ENCODE measurements at regions of chr20 and their contacts with region 1.

Region 1: DNA sequence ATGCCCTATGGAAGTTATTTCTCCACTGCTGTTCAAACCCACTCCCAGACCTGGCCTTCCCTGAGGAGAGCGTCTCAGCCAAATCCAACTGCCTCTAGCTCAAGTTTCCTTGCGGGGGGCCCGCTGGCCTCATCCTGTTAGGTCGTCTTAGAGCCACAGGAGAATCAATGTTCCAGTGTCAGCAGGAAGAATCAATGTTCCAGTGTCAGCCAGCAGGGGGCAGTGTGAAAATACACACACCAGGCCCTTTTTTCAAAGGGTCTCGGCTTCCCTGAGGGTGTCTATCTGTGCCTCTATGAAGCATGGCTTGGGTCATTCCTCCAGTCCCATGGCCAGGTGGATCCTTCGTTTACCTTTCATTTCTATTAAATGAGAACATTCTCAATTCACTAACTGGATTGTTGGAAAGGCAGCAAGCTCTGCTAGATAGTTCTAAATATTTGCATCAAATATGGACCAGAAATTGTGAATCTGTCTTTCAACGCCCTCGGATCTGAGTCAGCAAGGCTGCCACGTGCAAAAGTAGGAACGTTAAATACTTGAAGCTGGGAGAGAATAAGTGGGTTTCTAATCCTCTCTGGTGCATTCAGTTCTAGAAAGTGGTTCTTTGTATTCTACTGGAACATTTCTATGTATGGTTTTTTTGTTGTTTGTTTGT is 19.2 kb downstream of the PRND start:
- DNase-seq: peak; percentile 33 to 76 (median 52)
- H3K4me3 ChIP-seq: no peak overlapping the region
- H3K4me3 Mint-ChIP-seq: no peak overlapping the region
- H3K27ac ChIP-seq: no peak overlapping the region
- H3K27ac Mint-ChIP-seq: no peak overlapping the region
- H3K4me1 ChIP-seq: no peaks in the 10 kb centered on the region
- H3K4me1 Mint-ChIP-seq: peaks cover 2 to 5% (median 3%) of the 10 kb centered on the region in 3 donors
- H3K27me3 ChIP-seq: no peaks in the 10 kb centered on the region
- H3K27me3 Mint-ChIP-seq: peaks cover 5 to 29% of the 10 kb centered on the region in 2 donors

Region 2: GRCh38 chr20:4720041-4720976 is 20.6 kb before region 1 on chr20:
- CTCF ChIA-PET with region 1: interaction called, 11 read pairs
- POLR2A ChIA-PET with region 1: no interaction called
- DNase-seq: peak; percentile 57 to 80 (median 70)
- H3K4me3 ChIP-seq: no peak overlapping the region
- H3K4me3 Mint-ChIP-seq: peak overlapping the region in 1 of 7 donors; percentile 21
- H3K27ac ChIP-seq: no peak overlapping the region
- H3K27ac Mint-ChIP-seq: peak overlapping the region in 6 of 8 donors; percentile 2 to 89 (median 26)
- H3K4me1 ChIP-seq: peaks cover 7% of the 10 kb centered on the region
- H3K4me1 Mint-ChIP-seq: peaks cover 8 to 12% (median 10%) of the 10 kb centered on the region in 3 donors
- H3K27me3 ChIP-seq: no peaks in the 10 kb centered on the region
- H3K27me3 Mint-ChIP-seq: peaks cover 3 to 4% of the 10 kb centered on the region in 2 donors

Region 3: DNA sequence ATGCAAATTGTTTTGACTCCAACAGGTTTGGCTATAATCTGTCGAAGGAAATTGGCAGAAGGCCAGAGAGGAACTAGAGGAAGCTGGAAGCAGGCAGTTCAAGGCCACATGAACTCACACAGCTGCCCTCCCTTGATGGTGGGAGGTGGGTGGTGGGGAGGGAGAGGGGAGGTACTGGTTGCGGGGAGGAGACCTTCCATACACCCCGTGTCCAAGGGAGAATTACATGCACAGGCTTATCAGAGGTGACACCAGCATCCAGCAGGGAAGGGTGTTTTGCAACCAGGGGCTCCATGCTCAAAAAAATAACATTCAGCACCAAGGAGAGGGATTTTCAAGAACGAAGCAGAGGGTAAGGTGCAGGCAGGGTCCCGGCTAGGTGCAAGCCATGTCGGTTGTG is 10.1 kb before region 1 on chr20:
- CTCF ChIA-PET with region 1: interaction called, 13 read pairs
- POLR2A ChIA-PET with region 1: no interaction called
- DNase-seq: no peak
- H3K4me3 ChIP-seq: no peak overlapping the region
- H3K4me3 Mint-ChIP-seq: no peak overlapping the region
- H3K27ac ChIP-seq: no peak overlapping the region
- H3K27ac Mint-ChIP-seq: no peak overlapping the region
- H3K4me1 ChIP-seq: peaks cover 12% of the 10 kb centered on the region
- H3K4me1 Mint-ChIP-seq: peaks cover 9 to 13% (median 12%) of the 10 kb centered on the region in 3 donors
- H3K27me3 ChIP-seq: no peaks in the 10 kb centered on the region
- H3K27me3 Mint-ChIP-seq: peaks cover 20 to 28% of the 10 kb centered on the region in 2 donors

Measured in CD8-positive, alpha-beta memory T cell (primary cell).